Ascending aorta (tissue), 2 donors: ENCODE measurements at regions of chr7 and their contacts with region 1.

Region 1: GRCh38 chr7:5780801-5781496 is 514 bp downstream of the RNF216 start:
- DNase-seq: peak in 1 of 2 donors; percentile 71
- H3K4me3 ChIP-seq: peak overlapping the region; percentile 93 to 95
- H3K27ac ChIP-seq: peak overlapping the region; percentile 94 to 96
- H3K4me1 ChIP-seq: peaks cover 0 to 5% of the 10 kb centered on the region in 2 donors
- H3K27me3 ChIP-seq: no peaks in the 10 kb centered on the region
- CTCF ChIP-seq: no peak

Region 2: DNA sequence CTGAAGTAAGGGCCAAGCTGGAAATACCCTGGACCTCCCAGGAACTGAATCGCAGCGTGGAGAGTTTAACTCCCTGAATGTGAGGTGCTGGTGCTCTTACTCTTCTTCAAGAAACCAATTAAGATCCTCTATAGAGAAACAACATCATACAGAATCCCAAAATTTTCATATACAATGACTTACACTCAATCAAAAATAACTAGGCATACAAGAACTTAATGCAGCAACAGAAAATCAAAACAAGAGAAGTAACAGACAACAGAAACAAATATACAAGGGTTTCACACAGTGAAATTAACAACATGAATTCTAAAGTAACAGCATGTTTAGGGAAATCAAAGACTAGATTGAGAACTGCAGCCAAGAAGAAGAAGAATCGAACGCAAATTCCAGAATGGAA is 37.1 kb before region 1 on chr7:
- intact Hi-C with region 1: loop called (anchors 10 kb)
- DNase-seq: no peak
- H3K4me3 ChIP-seq: no peak overlapping the region
- H3K27ac ChIP-seq: no peak overlapping the region
- H3K4me1 ChIP-seq: peaks cover 5 to 9% of the 10 kb centered on the region in 2 donors
- H3K27me3 ChIP-seq: no peaks in the 10 kb centered on the region
- CTCF ChIP-seq: no peak

Region 3: GRCh38 chr7:5822742-5823503 is 42.0 kb after region 1 on chr7:
- intact Hi-C with region 1: loop called (anchors 5 kb)
- DNase-seq: peak; percentile 95 to 98
- H3K4me3 ChIP-seq: peak overlapping the region; percentile 62 to 87
- H3K27ac ChIP-seq: peak overlapping the region; percentile 58 to 68
- H3K4me1 ChIP-seq: peaks cover 3 to 5% of the 10 kb centered on the region in 2 donors
- H3K27me3 ChIP-seq: no peaks in the 10 kb centered on the region
- CTCF ChIP-seq: peak in 1 of 3 experiments; percentile 26

Region 4: DNA sequence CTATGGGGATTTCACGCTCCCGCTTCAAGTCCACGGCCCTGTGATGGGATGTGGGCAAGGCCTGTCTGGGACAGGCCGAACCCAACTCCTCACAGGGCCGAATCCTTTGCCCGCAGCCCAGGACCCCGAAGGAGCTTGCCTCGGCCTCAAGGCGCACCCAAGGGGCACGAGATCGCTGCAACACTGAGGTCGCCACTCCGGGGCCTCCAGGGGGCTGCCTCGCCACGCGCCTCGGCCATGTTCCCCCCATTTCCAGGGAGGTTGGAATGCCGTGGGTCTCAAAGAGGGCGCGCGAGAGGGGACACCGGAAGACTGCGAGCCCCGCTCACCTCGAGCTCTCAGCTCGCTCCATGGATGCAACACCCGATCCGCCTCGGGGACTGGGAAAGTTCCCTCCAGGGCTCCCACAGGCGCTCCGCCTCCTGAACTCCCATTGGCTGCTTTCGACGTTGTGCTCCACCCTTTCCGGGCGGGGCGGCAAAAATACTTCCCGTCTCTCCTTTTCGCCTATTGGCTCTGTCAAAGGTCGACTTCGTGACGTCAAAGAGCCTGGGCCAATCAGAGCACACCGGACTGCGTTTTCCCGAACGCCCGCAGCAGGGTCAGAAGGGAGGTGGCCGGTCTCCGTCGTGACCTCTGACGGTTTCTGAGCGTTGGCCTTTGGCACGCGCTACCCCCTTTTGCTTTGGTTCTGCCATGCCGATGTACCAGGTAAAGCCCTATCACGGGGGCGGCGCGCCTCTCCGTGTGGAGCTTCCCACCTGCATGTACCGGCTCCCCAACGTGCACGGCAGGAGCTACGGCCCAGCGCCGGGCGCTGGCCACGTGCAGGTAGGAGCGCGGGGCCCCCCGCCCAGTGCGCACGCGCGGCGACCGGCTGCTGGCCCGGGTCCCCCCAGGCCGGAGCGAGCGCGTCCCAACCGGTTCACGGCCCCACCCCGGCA is 228.0 kb after region 1 on chr7 and contains the starts of genes AIMP2 and PMS2:
- intact Hi-C with region 1: no loop called
- DNase-seq: peak; percentile 96 to 99
- H3K4me3 ChIP-seq: peak within 1 kb of the TSS; percentile 53 to 67
- H3K27ac ChIP-seq: peak within 1 kb of the TSS; percentile 67 to 85
- H3K4me1 ChIP-seq: peaks cover 0 to 17% of the 10 kb centered on the region in 2 donors
- H3K27me3 ChIP-seq: no peaks in the 10 kb centered on the region
- CTCF ChIP-seq: peak in 1 of 3 experiments; percentile 14
- total RNA-seq, gene AIMP2: 19.4 TPM
- total RNA-seq, gene PMS2: 13.2 TPM